PC-9 (cell line): ENCODE measurements at regions of chr12 and their contacts with region 1.

Region 1: GRCh38 chr12:93785262-93786010 is 108.3 kb downstream of the CRADD start:
- DNase-seq: peak; percentile 73 to 96
- H3K4me3 ChIP-seq: peak overlapping the region; percentile 40; the same call in 1 of the 2 replicates
- H3K27ac ChIP-seq: peak overlapping the region; percentile 93
- H3K4me1 ChIP-seq: peaks cover 58% of the 10 kb centered on the region
- H3K27me3 ChIP-seq: no peaks in the 10 kb centered on the region
- CTCF ChIP-seq: no peak

Region 2: DNA sequence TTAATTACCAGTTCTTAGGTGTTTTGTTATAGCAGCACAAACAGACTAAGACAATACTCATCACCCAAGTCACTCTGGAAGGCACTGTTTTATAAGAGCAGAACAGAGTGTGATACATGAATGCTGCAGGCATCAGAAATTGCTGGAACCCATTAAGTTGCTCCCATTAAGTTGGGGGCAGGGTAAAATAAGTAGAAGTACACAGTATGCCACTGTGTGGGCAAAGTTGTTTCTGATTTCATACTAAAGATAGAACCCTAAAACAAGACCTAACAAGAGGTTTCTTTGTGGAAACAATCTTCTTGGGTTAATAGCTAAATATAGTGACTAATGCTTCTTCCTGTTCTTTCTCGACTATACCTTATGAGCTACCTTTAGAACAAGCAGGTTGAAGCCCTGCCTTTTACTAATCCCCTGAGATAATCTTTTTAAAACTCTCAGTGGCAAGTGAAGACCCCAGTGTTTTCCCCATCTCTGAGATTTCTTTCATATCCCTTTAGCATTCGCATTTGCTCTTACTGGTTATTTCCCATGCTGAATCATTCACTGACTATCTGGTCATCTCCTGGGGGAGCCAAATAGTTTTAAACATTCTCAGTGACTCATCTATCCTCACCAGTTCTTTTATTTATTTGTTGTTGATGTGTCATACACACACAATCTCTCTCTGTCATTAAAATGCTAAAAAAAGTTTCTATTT is 160.7 kb before region 1 on chr12:
- CTCF ChIA-PET with region 1: no interaction called
- POLR2A ChIA-PET with region 1: no interaction called
- intact Hi-C with region 1: loop called (anchors 1 kb)
- DNase-seq: peak; percentile 24 to 95
- H3K4me3 ChIP-seq: no peak overlapping the region
- H3K27ac ChIP-seq: peak overlapping the region; percentile 94
- H3K4me1 ChIP-seq: peaks cover 26% of the 10 kb centered on the region
- H3K27me3 ChIP-seq: no peaks in the 10 kb centered on the region
- CTCF ChIP-seq: no peak

Region 3: DNA sequence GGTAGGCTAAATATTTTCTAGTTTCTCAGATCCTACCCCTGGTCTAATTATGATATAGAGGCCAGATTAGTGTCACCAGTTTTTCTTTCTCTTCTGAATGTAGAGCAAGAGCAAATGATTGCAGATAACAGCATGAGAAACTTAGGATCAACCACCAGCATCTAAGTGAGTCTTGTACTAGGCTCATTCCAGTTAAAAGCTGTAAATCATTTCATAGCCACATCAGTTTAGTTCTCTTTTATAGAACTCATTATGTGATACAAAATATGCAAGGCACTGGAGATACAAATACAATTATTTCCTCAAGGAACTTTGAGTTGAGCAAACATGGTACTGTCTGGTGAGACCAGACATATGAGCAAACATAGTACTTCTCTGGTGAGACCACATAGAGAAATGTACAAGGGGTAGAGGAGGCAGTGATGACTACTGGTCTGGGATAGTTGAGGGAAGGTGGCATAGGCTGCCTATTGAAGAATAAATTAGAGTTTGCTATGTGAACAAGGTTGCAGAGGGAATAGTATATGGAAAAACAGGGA is 48.7 kb before region 1 on chr12:
- CTCF ChIA-PET with region 1: interaction called, 12 read pairs
- POLR2A ChIA-PET with region 1: no interaction called
- intact Hi-C with region 1: no loop called
- DNase-seq: no peak
- H3K4me3 ChIP-seq: no peak overlapping the region
- H3K27ac ChIP-seq: no peak overlapping the region
- H3K4me1 ChIP-seq: peaks cover 1% of the 10 kb centered on the region
- H3K27me3 ChIP-seq: no peaks in the 10 kb centered on the region
- CTCF ChIP-seq: no peak

Region 4: DNA sequence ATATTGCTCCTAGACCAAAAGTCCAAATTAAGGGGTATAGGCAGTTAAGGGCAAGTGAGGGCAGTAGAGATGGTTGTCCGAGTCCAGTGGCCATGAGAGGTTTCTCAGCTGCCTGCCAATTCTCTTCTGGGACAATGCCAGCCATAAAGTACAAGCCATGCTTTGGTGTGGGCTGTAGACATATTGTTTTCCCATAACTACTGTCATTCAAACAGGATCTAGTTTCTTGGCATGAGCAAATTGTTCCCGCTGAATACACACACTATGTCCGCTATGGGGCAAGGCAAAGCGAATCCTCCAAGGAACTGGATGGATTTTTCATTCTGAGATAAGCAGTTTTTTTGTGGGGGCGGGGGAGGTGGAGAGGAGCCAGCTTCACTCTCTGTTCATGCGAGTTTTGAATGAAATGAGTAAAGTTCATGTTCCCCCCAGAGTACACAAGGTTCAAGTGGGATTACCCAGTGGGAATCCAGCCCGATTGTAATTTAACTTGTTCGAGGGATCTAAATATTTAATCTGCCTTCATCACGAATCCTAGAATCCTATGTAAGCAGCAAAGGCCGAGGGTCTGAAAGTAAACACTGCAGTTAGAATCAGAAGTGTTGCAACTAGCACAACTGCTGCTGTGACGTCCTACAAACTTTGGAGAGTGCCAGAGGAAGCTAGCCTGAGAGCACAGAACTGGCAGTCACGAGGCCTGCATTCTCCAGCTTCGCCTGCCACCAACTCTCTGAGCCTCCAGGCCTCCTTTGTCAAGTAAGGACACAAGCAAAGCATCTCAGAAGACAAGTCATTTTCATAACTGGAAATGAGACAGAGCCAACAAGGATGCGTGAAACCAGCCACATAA is 28.8 kb after region 1 on chr12:
- CTCF ChIA-PET with region 1: no interaction called
- POLR2A ChIA-PET with region 1: no interaction called
- intact Hi-C with region 1: no loop called
- DNase-seq: no peak
- H3K4me3 ChIP-seq: no peak overlapping the region
- H3K27ac ChIP-seq: no peak overlapping the region
- H3K4me1 ChIP-seq: no peaks in the 10 kb centered on the region
- H3K27me3 ChIP-seq: no peaks in the 10 kb centered on the region
- CTCF ChIP-seq: no peak

Region 5: DNA sequence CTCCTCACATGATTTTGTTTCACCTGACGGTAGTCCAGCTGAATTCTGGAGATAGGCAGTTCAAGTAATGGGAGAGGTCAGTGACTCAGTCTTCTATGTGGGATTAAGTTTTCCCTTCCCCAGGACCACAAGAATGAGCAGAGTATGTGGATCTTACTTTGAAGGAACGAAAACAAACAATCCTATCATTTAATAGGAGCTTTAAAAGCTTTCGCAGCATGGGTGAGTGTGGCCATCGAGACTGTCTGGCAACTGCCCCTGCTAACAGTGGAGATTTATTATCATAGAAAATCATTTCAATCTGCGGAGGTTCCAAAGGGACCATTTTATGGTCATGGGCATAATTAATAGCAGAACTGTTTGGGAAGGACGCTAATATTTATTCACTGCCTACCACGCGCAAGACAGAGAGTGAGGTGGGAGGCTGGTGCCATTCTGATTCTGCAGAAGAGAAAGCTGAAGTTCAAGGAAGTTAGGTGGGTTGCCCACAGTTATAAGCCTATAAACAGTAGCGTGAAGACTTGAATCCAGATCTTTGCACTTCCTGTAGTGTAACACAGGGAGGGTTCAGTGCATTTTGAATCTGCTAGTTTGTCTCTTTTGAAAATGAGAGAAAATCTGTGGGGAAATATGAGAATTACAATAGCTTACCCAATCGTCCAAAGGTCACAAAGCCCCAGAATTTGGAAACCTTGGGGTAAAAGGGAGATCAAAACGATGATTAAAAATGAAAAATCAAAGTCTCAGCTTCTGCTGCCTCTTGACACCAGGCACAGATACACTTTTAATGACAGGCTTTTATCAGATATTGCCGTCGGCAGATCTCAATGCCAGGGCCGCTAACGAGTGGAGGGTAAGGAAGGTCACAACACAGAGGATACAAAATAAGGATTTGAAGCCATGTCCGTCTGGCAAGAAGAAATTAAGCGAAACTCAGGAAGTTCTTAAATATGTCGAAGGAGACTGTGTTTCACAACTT is 101.4 kb after region 1 on chr12:
- CTCF ChIA-PET with region 1: no interaction called
- POLR2A ChIA-PET with region 1: no interaction called
- intact Hi-C with region 1: loop called (anchors 5 kb)
- DNase-seq: no peak
- H3K4me3 ChIP-seq: no peak overlapping the region
- H3K27ac ChIP-seq: no peak overlapping the region
- H3K4me1 ChIP-seq: peaks cover 8% of the 10 kb centered on the region
- H3K27me3 ChIP-seq: no peaks in the 10 kb centered on the region
- CTCF ChIP-seq: no peak